B cell (primary cell): ENCODE measurements at regions of chr17 and their contacts with region 1.

Region 1: DNA sequence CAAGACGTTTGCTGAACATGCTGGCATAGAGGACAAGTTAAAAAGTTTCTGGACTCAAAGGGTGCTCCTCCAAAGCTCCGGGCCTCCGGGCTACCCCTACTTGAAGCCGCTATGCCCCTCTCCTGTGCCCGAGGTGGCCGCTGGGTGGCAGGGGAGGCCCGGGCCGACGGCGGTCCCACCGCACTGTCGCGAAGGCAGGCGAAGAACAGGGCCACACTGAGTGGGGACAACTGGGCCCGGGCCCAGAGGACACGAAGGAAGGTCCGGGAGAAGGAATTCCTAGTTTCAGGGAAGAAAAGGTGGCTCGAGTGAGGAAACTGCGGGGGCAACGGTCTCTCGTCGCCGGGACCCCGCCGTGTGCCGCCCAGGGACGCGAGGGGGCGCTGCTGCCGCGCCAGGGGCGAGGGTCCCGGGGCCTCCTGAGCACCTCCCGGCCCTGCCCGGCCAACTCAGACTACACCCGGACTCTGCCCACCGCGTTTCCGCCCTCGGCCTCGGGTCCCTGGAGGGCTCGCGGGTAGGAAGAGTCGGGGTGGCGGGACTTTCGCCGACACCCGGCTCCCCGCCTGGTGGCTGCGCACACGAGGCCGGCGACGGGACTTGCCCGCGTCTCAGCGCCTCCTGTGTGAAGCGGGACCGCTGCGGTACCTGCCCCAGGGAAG is 885 bp upstream of the CHCT1 start:
- DNase-seq: peak; percentile 88
- ATAC-seq: peak; percentile 90
- H3K4me3 ChIP-seq: peak overlapping the region; percentile 44 to 71 (median 56)
- H3K4me3 Mint-ChIP-seq: peak overlapping the region; percentile 87
- H3K27ac ChIP-seq: peak overlapping the region; percentile 61 to 76
- H3K27ac Mint-ChIP-seq: peak overlapping the region; percentile 87
- H3K4me1 ChIP-seq: peaks cover 8 to 15% of the 10 kb centered on the region in 2 donors
- H3K4me1 Mint-ChIP-seq: peaks cover 12% of the 10 kb centered on the region
- H3K27me3 ChIP-seq: no peaks in the 10 kb centered on the region
- H3K27me3 Mint-ChIP-seq: no peaks in the 10 kb centered on the region
- CTCF ChIP-seq: peak; percentile 100

Region 2: GRCh38 chr17:60231234-60231633 is 190.2 kb before region 1 on chr17:
- CTCF ChIA-PET with region 1: interaction called, 4 read pairs
- POLR2A ChIA-PET with region 1: no interaction called
- intact Hi-C with region 1: loop called (anchors 5 kb)
- DNase-seq: peak; percentile 9
- ATAC-seq: no peak
- H3K4me3 ChIP-seq: no peak overlapping the region
- H3K4me3 Mint-ChIP-seq: no peak overlapping the region
- H3K27ac ChIP-seq: no peak overlapping the region
- H3K27ac Mint-ChIP-seq: no peak overlapping the region
- H3K4me1 ChIP-seq: no peaks in the 10 kb centered on the region
- H3K4me1 Mint-ChIP-seq: no peaks in the 10 kb centered on the region
- H3K27me3 ChIP-seq: no peaks in the 10 kb centered on the region
- H3K27me3 Mint-ChIP-seq: no peaks in the 10 kb centered on the region
- CTCF ChIP-seq: no peak

Region 3: GRCh38 chr17:60392042-60392844 is 29.2 kb before region 1 on chr17 and contains the start of gene USP32:
- CTCF ChIA-PET with region 1: interaction called, 8 read pairs
- POLR2A ChIA-PET with region 1: interaction called, 5 read pairs
- intact Hi-C with region 1: loop called (anchors 1 kb)
- DNase-seq: peak; percentile 98
- ATAC-seq: peak; percentile 88
- H3K4me3 ChIP-seq: peak within 1 kb of the TSS; percentile 71 to 95 (median 87)
- H3K4me3 Mint-ChIP-seq: peak within 1 kb of the TSS; percentile 96
- H3K27ac ChIP-seq: peak within 1 kb of the TSS; percentile 92 to 96
- H3K27ac Mint-ChIP-seq: peak within 1 kb of the TSS; percentile 97
- H3K4me1 ChIP-seq: peaks cover 43 to 44% of the 10 kb centered on the region in 2 donors
- H3K4me1 Mint-ChIP-seq: peaks cover 67% of the 10 kb centered on the region
- H3K27me3 ChIP-seq: no peaks in the 10 kb centered on the region
- H3K27me3 Mint-ChIP-seq: no peaks in the 10 kb centered on the region
- CTCF ChIP-seq: no peak
- total RNA-seq, gene USP32: 48.8 and 56.9 TPM in 2 replicates

Region 4: GRCh38 chr17:60398227-60398959 is 23.0 kb before region 1 on chr17:
- CTCF ChIA-PET with region 1: interaction called, 16 read pairs
- POLR2A ChIA-PET with region 1: no interaction called
- intact Hi-C with region 1: loop called (anchors 1 kb)
- DNase-seq: peak; percentile 93
- ATAC-seq: peak; percentile 94
- H3K4me3 ChIP-seq: peak overlapping the region in 1 of 5 experiments; percentile 49
- H3K4me3 Mint-ChIP-seq: peak overlapping the region; percentile 23
- H3K27ac ChIP-seq: peak overlapping the region; percentile 80 to 85
- H3K27ac Mint-ChIP-seq: peak overlapping the region; percentile 80
- H3K4me1 ChIP-seq: peaks cover 48 to 60% of the 10 kb centered on the region in 2 donors
- H3K4me1 Mint-ChIP-seq: peaks cover 73% of the 10 kb centered on the region
- H3K27me3 ChIP-seq: no peaks in the 10 kb centered on the region
- H3K27me3 Mint-ChIP-seq: no peaks in the 10 kb centered on the region
- CTCF ChIP-seq: no peak

Region 5: GRCh38 chr17:60435244-60436167 is 14.1 kb after region 1 on chr17:
- CTCF ChIA-PET with region 1: interaction called, 4 read pairs
- POLR2A ChIA-PET with region 1: interaction called, 3 read pairs
- intact Hi-C with region 1: loop called (anchors 1 kb)
- DNase-seq: peak; percentile 79
- ATAC-seq: peak; percentile 85
- H3K4me3 ChIP-seq: no peak overlapping the region
- H3K4me3 Mint-ChIP-seq: no peak overlapping the region
- H3K27ac ChIP-seq: no peak overlapping the region
- H3K27ac Mint-ChIP-seq: no peak overlapping the region
- H3K4me1 ChIP-seq: no peaks in the 10 kb centered on the region
- H3K4me1 Mint-ChIP-seq: no peaks in the 10 kb centered on the region
- H3K27me3 ChIP-seq: no peaks in the 10 kb centered on the region
- H3K27me3 Mint-ChIP-seq: peaks cover 9% of the 10 kb centered on the region
- CTCF ChIP-seq: peak; percentile 90

Region 6: DNA sequence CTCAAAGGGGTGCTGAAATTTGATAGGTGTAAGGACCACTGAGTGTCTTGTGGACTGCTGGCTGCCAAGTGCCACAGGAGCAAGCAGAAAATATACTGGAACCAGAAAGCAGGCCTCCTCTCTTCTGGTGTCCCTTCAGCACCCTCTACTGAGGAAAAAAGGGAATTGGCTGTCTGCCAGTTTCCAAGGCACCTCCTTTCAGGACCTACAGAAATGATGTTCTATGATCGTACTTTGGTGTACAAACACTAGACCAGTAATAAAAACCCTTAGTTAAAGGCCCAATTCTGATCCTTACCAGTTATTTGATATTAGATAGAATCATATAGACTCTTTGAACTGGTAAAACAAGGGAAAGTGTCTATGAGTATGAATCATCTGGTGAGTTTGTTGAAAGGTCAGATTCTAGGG is 220.4 kb after region 1 on chr17:
- CTCF ChIA-PET with region 1: interaction called, 3 read pairs
- POLR2A ChIA-PET with region 1: no interaction called
- intact Hi-C with region 1: loop called (anchors 1 kb)
- DNase-seq: peak; percentile 59
- ATAC-seq: peak; percentile 36
- H3K4me3 ChIP-seq: no peak overlapping the region
- H3K4me3 Mint-ChIP-seq: no peak overlapping the region
- H3K27ac ChIP-seq: no peak overlapping the region
- H3K27ac Mint-ChIP-seq: no peak overlapping the region
- H3K4me1 ChIP-seq: no peaks in the 10 kb centered on the region
- H3K4me1 Mint-ChIP-seq: peaks cover 2% of the 10 kb centered on the region
- H3K27me3 ChIP-seq: no peaks in the 10 kb centered on the region
- H3K27me3 Mint-ChIP-seq: no peaks in the 10 kb centered on the region
- CTCF ChIP-seq: peak; percentile 27